ENCODE measurements at regions of chr21 and their contacts with region 1.

Region 1: DNA sequence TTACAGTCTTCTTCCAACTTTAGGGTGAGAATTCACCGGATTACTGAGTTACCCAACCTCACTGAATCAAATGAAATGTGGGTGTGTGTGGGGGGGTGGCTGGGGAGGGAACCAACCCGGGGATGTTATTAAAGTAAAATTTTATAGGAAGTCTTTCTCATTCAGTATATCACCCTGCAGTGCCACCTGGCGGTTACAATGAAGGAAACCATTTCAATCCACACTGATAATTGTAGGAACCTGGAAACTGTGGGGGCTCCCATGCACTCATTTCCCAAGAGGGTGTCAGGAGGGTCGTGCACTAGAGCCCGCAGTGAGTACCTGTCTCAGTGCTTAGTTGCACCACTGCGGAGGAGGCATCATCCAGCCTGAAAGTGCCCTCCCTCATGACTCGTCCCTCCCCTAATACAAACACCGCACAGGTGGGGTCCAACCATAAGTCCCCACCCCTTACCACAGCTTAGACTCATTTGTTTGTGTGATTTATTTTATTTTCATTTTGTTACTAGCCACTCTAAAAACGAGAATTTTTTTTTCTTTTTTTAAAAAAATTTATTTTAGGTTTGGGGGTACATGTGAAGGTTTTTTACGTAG is 29.1 kb upstream of the IGSF5 start:
- DNase-seq: peak; percentile 45
- H3K4me3 ChIP-seq: no peak overlapping the region
- H3K27ac ChIP-seq: no peak overlapping the region
- H3K27me3 ChIP-seq: no peaks in the 10 kb centered on the region
- CTCF ChIP-seq: peak; percentile 63

Region 2: DNA sequence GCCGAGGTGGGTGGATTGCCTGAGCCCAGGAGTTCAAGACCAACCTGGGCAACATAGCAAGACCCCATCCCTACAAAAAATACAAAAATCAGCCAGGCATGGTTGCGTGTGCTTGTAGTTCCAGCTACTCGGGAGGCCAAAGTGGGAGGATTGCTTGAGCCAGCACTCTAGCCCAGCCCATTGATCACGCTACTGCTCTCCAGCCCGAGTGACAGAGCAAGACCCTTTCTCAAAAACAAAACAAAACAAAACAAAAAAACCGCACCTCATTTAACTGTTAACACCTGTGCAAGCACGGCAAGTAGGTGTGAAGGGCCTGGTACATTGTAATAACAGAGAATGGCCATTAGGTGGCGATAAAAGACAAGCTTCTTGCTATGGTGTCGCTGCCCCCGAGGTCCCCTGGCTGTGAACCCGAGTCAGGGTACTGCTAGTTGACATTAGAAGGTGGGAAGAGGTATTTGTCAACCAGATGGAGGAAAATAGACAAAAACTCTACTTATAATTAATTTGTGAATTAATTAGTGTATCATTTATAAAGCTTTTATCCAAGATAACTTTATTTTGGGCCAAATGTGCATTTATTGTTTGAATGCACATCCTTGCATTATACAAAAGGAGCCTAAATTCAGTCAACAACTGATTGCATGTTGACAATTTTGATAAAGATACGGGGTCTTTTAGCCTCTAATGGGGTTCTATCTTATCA is 197.6 kb before region 1 on chr21:
- in situ Hi-C with region 1: loop called (anchors 25 kb)
- DNase-seq: peak; percentile 10
- H3K4me3 ChIP-seq: no peak overlapping the region
- H3K27ac ChIP-seq: no peak overlapping the region
- H3K27me3 ChIP-seq: no peaks in the 10 kb centered on the region
- CTCF ChIP-seq: peak; percentile 87

Measured in brain microvascular endothelial cell (primary cell).